Aorta (tissue), 5 donors: ENCODE measurements at regions of chr6 and their contacts with region 1.

Region 1: GRCh38 chr6:72950114-72950860 is 275.0 kb downstream of the KHDC1L start:
- DNase-seq: no peak
- ATAC-seq: peak; percentile 77
- H3K4me3 ChIP-seq: no peak overlapping the region
- H3K27ac ChIP-seq: peak overlapping the region in 1 of 2 donors; percentile 94
- H3K4me1 ChIP-seq: peaks cover 3 to 20% of the 10 kb centered on the region in 2 donors
- H3K27me3 ChIP-seq: no peaks in the 10 kb centered on the region

Region 2: GRCh38 chr6:72748759-72749158 is 201.5 kb before region 1 on chr6:
- intact Hi-C with region 1: loop called in 1 of 2 experiments (anchors 5 kb)
- DNase-seq: no peak
- ATAC-seq: peak; percentile 29
- H3K4me3 ChIP-seq: no peak overlapping the region
- H3K27ac ChIP-seq: no peak overlapping the region
- H3K4me1 ChIP-seq: peaks cover 2 to 8% of the 10 kb centered on the region in 2 donors
- H3K27me3 ChIP-seq: no peaks in the 10 kb centered on the region

Region 3: DNA sequence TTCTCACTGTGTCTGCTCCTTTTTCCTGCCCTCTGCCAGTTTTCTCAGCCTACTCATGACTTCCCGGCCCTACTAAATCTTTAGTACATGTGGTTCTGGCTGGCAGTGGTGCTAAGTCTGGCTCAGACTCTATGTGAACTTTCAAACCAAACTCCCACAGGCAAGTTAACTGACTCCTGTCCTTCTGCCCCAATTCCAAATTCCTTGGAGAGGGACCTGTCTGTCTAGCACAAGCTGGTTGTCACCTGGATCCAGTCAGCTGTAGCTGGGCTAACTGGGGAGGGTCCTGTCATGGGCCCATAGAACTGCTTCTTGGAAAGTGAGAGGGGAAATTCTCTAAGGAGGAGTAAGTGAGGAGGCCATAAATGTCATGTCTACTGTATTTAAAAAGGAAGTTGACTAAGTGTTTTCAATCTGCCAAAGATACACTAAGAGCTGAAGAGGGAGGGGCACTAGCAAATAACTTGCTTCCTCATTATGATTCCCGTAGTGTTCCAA is 88.3 kb before region 1 on chr6:
- intact Hi-C with region 1: loop called (anchors 2 to 5 kb)
- DNase-seq: peak in 1 of 2 donors; percentile 75
- ATAC-seq: peak; percentile 87
- H3K4me3 ChIP-seq: no peak overlapping the region
- H3K27ac ChIP-seq: peak overlapping the region; percentile 23 to 78
- H3K4me1 ChIP-seq: peaks cover 6 to 8% of the 10 kb centered on the region in 2 donors
- H3K27me3 ChIP-seq: no peaks in the 10 kb centered on the region

Region 4: DNA sequence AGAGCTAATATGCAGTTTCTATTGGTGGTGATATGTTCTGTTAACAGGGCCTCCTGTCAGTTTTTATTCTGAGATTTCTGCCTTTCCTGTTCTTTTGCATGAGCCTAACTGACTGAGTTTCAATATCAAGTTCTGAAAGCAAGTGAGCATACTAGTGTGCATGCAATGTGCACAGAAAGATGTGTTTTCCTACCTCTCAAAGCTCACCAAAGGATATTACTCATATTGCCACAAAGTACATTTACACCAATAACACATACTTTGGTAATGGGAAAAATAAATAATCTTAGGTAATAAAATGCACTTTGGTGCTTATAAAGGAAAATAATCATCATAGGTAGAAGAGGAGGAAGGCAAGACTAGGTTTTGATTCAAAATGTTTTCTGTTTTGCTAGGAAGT is 80.0 kb after region 1 on chr6:
- intact Hi-C with region 1: no loop called
- DNase-seq: no peak
- ATAC-seq: no peak
- H3K4me3 ChIP-seq: no peak overlapping the region
- H3K27ac ChIP-seq: no peak overlapping the region
- H3K4me1 ChIP-seq: no peaks in the 10 kb centered on the region
- H3K27me3 ChIP-seq: no peaks in the 10 kb centered on the region

Region 5: DNA sequence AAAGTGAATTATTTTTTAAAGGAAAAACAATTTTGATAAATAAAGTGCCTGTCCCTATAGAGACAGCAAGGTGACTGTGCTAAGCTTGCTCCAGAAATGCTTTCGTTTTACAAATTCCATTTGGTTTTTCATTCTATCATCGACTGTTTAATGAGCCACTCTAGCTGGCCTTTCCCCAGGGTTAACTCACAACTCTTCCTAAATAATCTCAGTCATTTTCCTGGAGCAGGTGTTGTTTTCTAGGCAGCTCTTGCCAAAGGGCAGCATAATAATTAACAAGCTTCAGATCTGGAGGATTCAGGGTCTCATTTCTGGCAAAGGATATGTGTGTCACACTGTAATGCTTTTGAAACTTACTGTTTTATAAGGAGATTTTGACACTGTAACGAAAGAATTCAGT is 90.8 kb after region 1 on chr6:
- intact Hi-C with region 1: loop called in 1 of 2 experiments (anchors 10 kb)
- DNase-seq: no peak
- ATAC-seq: no peak
- H3K4me3 ChIP-seq: peak overlapping the region; percentile 42 to 69
- H3K27ac ChIP-seq: no peak overlapping the region
- H3K4me1 ChIP-seq: peaks cover 0 to 7% of the 10 kb centered on the region in 2 donors
- H3K27me3 ChIP-seq: no peaks in the 10 kb centered on the region